ENCODE measurements at regions of chr17 and their contacts with region 1.

Region 1: DNA sequence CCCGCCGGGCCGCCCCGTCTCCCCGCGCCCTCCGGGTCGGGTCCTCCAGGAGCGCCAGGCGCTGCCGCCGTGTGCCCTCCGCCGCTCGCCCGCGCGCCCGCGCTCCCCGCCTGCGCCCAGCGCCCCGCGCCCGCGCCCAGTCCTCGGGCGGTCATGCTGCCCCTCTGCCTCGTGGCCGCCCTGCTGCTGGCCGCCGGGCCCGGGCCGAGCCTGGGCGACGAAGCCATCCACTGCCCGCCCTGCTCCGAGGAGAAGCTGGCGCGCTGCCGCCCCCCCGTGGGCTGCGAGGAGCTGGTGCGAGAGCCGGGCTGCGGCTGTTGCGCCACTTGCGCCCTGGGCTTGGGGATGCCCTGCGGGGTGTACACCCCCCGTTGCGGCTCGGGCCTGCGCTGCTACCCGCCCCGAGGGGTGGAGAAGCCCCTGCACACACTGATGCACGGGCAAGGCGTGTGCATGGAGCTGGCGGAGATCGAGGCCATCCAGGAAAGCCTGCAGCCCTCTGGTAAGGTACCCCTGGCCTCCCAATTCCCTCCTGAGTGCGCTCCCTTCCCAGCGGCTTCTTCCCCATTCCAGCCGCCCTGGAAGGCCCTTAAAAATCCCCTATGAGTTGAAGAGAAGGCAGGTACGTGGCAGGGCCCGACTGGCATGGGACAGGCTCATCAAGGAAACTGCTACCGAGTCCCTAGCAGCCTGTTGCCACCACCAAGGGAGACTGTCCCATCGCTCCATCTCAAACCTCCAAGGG is 505 bp downstream of the IGFBP4 start:
- DNase-seq: no peak
- H3K4me3 ChIP-seq: peak overlapping the region; percentile 66 to 88 (median 81)
- H3K27ac ChIP-seq: peak overlapping the region; percentile 88 to 98 (median 93)
- H3K4me1 ChIP-seq: peaks cover 44 to 69% (median 64%) of the 10 kb centered on the region in 4 donors
- H3K27me3 ChIP-seq: no peaks in the 10 kb centered on the region
- CTCF ChIP-seq: peak; percentile 18 to 43 (median 31)
- EP300 ChIP-seq: no peak
- POLR2A ChIP-seq: no peak

Region 2: GRCh38 chr17:40340880-40341807 is 102.6 kb before region 1 on chr17:
- intact Hi-C with region 1: no loop called
- DNase-seq: peak; percentile 97
- H3K4me3 ChIP-seq: peak overlapping the region; percentile 87 to 97 (median 92)
- H3K27ac ChIP-seq: peak overlapping the region; percentile 96 to 98 (median 96)
- H3K4me1 ChIP-seq: peaks cover 53 to 87% (median 84%) of the 10 kb centered on the region in 4 donors
- H3K27me3 ChIP-seq: no peaks in the 10 kb centered on the region
- CTCF ChIP-seq: peak in 2 of 3 experiments; percentile 8 to 26
- EP300 ChIP-seq: no peak
- POLR2A ChIP-seq: peak; percentile 60

Region 3: DNA sequence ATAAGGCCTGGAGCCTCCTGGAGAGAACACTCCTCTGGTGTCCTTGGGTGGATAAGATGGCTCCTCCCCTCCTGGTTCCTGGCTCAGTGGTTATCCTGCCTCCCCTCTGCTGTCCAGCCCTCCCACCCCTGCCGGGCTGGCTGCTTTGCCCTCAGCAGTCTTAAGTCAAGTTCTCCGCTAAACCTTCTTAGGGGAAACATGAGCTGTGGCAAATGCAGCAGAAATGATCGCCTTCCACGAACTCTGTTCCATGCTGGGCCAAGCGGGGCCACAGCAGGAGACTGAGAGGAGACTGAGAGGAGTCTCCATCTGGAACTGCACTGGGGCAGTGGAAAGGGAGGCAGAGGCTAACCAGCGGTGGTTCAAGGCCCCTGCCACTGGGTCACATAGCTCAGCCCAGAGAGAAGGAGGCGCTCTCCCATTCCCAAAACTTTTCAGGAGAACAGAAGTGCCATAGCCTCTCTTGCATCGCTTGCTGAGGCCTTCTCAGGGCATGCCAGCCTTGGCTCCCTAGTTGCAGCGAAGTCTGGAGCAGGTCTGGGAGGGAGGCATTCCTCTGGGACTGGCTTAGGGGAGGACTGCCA is 30.8 kb after region 1 on chr17:
- intact Hi-C with region 1: loop called (anchors 1 kb)
- DNase-seq: no peak
- H3K4me3 ChIP-seq: no peak overlapping the region
- H3K27ac ChIP-seq: peak overlapping the region in 3 of 4 donors; percentile 18 to 32 (median 19)
- H3K4me1 ChIP-seq: peaks cover 6 to 65% (median 56%) of the 10 kb centered on the region in 4 donors
- H3K27me3 ChIP-seq: no peaks in the 10 kb centered on the region
- CTCF ChIP-seq: no peak
- EP300 ChIP-seq: no peak
- POLR2A ChIP-seq: no peak

Region 4: GRCh38 chr17:40499551-40500174 is 55.9 kb after region 1 on chr17:
- intact Hi-C with region 1: loop called (anchors 2 kb)
- DNase-seq: peak; percentile 96
- H3K4me3 ChIP-seq: peak overlapping the region; percentile 29 to 36 (median 30)
- H3K27ac ChIP-seq: peak overlapping the region; percentile 71 to 82 (median 77)
- H3K4me1 ChIP-seq: peaks cover 15 to 38% (median 37%) of the 10 kb centered on the region in 4 donors
- H3K27me3 ChIP-seq: no peaks in the 10 kb centered on the region
- CTCF ChIP-seq: peak in 2 of 3 experiments; percentile 23 to 31
- EP300 ChIP-seq: no peak
- POLR2A ChIP-seq: no peak